ENCODE measurements at regions of chr11 and their contacts with region 1.

Region 1: GRCh38 chr11:64935359-64936081 is at the start of gene GPHA2:
- DNase-seq: no peak
- H3K4me3 ChIP-seq: no peak within 1 kb of the TSS
- H3K27ac ChIP-seq: no peak within 1 kb of the TSS
- H3K4me1 ChIP-seq: no peaks in the 10 kb centered on the region
- H3K27me3 ChIP-seq: no peaks in the 10 kb centered on the region
- CTCF ChIP-seq: no peak
- total RNA-seq, gene GPHA2: not detected

Region 2: GRCh38 chr11:64989416-64989815 is 53.9 kb after region 1 on chr11:
- intact Hi-C with region 1: loop called (anchors 10 kb)
- DNase-seq: no peak
- H3K4me3 ChIP-seq: no peak overlapping the region
- H3K27ac ChIP-seq: no peak overlapping the region
- H3K4me1 ChIP-seq: no peaks in the 10 kb centered on the region
- H3K27me3 ChIP-seq: no peaks in the 10 kb centered on the region
- CTCF ChIP-seq: no peak

Region 3: DNA sequence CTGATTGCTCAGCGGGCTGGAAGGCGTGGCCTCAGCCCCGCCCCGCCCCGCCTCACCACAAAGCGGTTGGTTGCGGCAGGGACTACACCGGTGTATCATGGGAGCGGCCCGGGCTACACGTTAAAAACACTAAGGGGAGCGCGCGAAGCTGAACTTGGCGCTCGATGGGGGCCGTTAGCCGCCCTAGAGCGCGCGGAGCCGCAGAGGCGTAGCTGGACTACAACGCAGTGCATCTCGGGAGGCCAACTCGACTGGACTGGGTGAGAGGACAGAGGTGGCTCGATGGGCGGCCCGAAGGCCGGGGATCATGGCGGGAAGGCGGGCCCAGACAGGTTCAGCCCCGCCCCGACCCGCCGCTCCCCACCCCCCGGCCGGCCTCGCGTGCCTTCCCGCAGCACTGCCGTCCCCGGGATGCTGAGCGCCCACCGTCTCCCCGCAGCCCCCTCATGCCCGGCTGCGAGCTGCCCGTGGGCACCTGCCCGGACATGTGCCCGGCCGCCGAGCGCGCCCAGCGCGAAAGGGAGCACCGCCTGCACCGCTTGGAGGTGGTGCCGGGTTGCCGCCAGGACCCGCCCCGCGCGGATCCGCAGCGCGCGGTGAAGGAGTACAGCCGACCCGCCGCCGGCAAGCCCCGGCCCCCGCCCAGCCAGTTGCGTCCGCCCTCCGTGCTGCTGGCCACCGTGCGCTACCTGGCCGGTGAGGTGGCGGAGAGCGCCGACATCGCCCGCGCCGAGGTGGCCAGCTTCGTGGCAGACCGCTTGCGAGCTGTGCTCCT is 105.5 kb after region 1 on chr11 and contains the start of gene SAC3D1:
- intact Hi-C with region 1: no loop called
- DNase-seq: peak; percentile 93
- H3K4me3 ChIP-seq: peak within 1 kb of the TSS; percentile 95
- H3K27ac ChIP-seq: peak within 1 kb of the TSS; percentile 94
- H3K4me1 ChIP-seq: peaks cover 4% of the 10 kb centered on the region
- H3K27me3 ChIP-seq: no peaks in the 10 kb centered on the region
- CTCF ChIP-seq: no peak
- total RNA-seq, gene SAC3D1: 12.9 to 26.7 TPM

Region 4: DNA sequence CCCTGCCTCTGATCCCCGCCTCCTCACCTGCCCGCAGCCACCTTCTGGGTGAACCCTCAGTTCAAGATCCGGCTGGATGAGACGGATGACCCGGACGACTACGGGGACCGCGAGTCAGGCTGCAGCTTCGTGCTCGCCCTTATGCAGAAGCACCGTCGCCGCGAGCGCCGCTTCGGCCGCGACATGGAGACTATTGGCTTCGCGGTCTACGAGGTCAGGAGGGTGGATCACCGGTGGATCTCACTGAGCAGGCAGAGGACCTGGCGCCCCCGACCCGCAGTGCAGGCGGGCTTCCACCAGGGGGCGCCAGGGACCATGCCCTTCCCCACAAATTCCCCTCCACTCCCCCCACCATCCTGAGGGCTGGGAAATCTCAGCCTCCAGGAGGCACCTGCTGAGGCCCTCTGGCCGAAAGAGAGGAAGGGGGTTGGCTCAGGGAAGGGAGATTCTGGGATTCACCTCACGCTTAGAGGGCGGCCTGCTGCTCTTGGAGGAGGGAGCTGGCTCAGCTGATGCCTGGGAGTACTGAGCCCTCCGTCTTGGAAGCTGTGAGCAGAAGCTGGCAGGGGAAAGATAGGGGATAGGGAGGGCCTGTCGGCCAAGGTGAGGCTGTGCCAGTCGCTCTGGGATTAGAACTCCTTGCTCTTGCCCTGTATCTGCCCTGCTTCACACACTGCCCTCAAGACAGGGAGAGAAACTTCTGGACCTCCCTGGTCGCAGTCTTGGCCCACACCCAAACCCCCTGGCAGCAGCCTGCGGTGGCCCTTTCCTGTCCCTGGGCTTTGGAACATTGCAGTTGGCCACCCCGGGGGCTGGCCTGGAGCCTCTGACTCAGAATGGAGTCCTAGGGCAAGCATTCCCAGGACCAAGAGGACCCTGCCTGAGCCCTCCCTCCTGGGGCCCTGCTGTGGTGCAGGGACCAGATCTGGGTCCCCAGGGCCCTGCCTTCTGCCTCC is 269.4 kb after region 1 on chr11:
- intact Hi-C with region 1: no loop called
- DNase-seq: no peak
- H3K4me3 ChIP-seq: no peak overlapping the region
- H3K27ac ChIP-seq: no peak overlapping the region
- H3K4me1 ChIP-seq: peaks cover 14% of the 10 kb centered on the region
- H3K27me3 ChIP-seq: no peaks in the 10 kb centered on the region
- CTCF ChIP-seq: peak; percentile 83